BJ (cell line): ENCODE measurements at regions of chr14 and their contacts with region 1.

Region 1: GRCh38 chr14:76720382-76720813 is 40.9 kb upstream of the VASH1 start:
- DNase-seq: no peak
- H3K4me3 ChIP-seq: no peak overlapping the region
- H3K27me3 ChIP-seq: peaks cover 8% of the 10 kb centered on the region
- CTCF ChIP-seq: no peak

Region 2: GRCh38 chr14:76812211-76813044 is 92.0 kb after region 1 on chr14 and contains the start of gene ANGEL1:
- CTCF ChIA-PET with region 1: interaction called, 10 read pairs
- POLR2A ChIA-PET with region 1: no interaction called
- DNase-seq: peak; percentile 23
- H3K4me3 ChIP-seq: peak within 1 kb of the TSS; percentile 80
- H3K27me3 ChIP-seq: peaks cover 2% of the 10 kb centered on the region; the same call in 1 of the 2 replicates
- CTCF ChIP-seq: no peak
- polyA plus RNA-seq, gene ANGEL1: 14.0 and 16.8 TPM in 2 replicates